Endothelial cell of umbilical vein (primary cell): ENCODE measurements at regions of chr7 and their contacts with region 1.

Region 1: DNA sequence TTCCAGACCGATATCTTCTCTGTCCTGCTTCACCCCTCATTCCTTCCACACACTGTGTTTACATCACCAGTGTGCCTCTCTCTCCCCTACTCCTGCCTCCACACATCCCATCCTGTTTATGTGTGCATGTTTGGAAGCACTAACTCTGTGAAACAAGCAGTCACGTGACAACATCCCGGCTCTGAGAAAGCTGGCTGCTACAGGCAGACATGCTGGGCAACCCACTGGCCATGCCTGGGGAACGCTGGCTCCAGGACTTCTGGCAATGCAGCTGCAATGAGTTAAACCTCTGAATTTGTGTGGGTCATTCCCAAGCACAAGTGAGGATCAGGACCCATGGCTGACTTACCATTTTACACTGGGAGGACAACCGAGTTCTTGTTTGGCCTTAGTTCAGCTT is 74.0 kb downstream of the WNT2 start:
- DNase-seq: no peak
- H3K4me3 ChIP-seq: no peak overlapping the region
- H3K27ac ChIP-seq: no peak overlapping the region
- H3K4me1 ChIP-seq: no peaks in the 10 kb centered on the region
- H3K27me3 ChIP-seq: peaks cover 1 to 3% of the 10 kb centered on the region in 2 experiments
- CTCF ChIP-seq: no peak
- POLR2A ChIP-seq: no peak

Region 2: DNA sequence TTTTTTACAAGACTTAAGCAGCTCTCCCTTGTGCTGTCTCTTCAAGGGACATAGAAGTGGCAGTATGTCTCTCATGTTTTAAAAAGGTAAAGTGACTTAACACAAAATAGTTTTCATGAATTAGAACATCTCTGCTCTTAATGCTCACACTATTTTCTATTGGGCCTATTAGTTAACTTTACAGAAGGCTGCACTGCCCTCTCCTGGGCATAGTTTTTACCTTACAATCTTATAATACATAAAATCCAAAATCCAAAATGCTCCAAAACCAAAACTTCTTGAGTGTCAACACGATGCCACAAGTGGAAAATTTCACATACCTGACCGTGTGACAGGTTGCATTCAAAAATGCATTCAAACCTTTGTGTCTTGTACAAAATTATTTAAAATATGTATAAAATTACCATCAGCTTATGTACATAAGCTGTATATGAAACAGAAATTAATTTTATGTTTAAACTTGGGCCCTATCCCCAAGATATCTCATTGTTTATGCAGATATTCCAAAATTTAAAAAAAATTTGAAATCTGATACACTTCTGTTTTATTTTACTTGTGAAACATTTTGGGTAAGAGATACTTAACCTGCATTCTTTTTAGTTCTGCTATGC is 1012.7 kb before region 1 on chr7:
- CTCF ChIA-PET with region 1: no interaction called
- POLR2A ChIA-PET with region 1: no interaction called
- dilution Hi-C with region 1: no loop called
- intact Hi-C with region 1: no loop called
- DNase-seq: peak; percentile 74
- H3K4me3 ChIP-seq: no peak overlapping the region
- H3K27ac ChIP-seq: no peak overlapping the region
- H3K4me1 ChIP-seq: peaks cover 11% of the 10 kb centered on the region
- H3K27me3 ChIP-seq: no peaks in the 10 kb centered on the region
- CTCF ChIP-seq: peak; percentile 22 to 24
- POLR2A ChIP-seq: no peak

Region 3: DNA sequence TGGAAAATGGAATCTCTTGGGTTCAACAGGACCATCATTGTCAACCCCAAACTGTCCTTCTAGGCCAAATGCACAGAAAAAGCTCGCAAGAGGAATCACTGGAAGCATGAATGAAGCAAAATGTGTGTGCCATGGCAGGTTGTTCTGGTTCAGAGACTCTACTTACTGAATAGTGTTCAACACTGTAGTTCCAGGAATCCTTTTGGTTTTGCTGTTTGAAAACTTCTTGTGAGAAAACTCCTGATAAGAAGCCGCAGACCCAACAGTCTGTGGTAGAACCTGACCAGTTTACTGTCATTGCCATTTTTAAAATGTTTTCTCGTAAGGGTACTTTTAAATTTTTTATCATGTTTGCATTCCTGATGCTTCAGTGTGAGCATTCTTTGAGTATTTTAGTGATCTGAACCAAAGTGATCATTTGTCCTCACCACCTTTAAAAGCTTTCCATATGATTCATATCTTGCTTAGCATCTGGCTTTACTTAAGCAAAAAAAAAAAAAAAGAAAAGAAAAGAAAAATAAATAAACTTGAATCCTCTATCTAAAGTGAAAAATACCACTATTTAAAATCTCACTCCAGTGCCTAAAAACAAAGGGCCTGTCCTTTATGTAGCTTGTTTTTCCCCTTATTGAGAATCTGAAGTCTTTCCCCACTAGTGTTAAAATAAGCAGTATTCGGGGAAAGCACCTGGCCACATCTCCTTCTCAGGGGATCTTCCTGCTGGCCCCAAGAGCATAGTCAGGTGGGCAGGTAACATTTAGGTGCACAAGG is 18.4 kb before region 1 on chr7:
- CTCF ChIA-PET with region 1: no interaction called
- POLR2A ChIA-PET with region 1: interaction called, 11 read pairs
- dilution Hi-C with region 1: no loop called
- intact Hi-C with region 1: no loop called
- DNase-seq: no peak
- H3K4me3 ChIP-seq: no peak overlapping the region
- H3K27ac ChIP-seq: no peak overlapping the region
- H3K4me1 ChIP-seq: no peaks in the 10 kb centered on the region
- H3K27me3 ChIP-seq: no peaks in the 10 kb centered on the region
- CTCF ChIP-seq: no peak
- POLR2A ChIP-seq: no peak